ENCODE measurements at regions of chr6 and their contacts with region 1.

Region 1: GRCh38 chr6:2209226-2209809 is 36.1 kb downstream of the GMDS start:
- DNase-seq: peak; percentile 15
- ATAC-seq: peak; percentile 99
- H3K4me3 ChIP-seq: no peak overlapping the region
- H3K27ac ChIP-seq: no peak overlapping the region
- H3K4me1 ChIP-seq: no peaks in the 10 kb centered on the region
- H3K27me3 ChIP-seq: no peaks in the 10 kb centered on the region
- CTCF ChIP-seq: peak; percentile 63 to 89 (median 73)
- EP300 ChIP-seq: no peak
- POLR2A ChIP-seq: no peak
- RAD21 ChIP-seq: peak; percentile 66

Region 2: GRCh38 chr6:2196079-2196679 is 13.1 kb before region 1 on chr6:
- CTCF ChIA-PET with region 1: interaction called, 10 read pairs
- POLR2A ChIA-PET with region 1: interaction called, 4 read pairs
- RAD21 ChIA-PET with region 1: interaction called, 6 read pairs
- SMC1A ChIA-PET with region 1: interaction called, 7 read pairs
- in situ Hi-C with region 1: no loop called
- intact Hi-C with region 1: no loop called
- DNase-seq: peak; percentile 13
- ATAC-seq: peak; percentile 87
- H3K4me3 ChIP-seq: no peak overlapping the region
- H3K27ac ChIP-seq: no peak overlapping the region
- H3K4me1 ChIP-seq: no peaks in the 10 kb centered on the region
- H3K27me3 ChIP-seq: no peaks in the 10 kb centered on the region
- CTCF ChIP-seq: peak; percentile 67 to 79 (median 77)
- EP300 ChIP-seq: no peak
- POLR2A ChIP-seq: no peak
- RAD21 ChIP-seq: peak; percentile 88

Region 3: DNA sequence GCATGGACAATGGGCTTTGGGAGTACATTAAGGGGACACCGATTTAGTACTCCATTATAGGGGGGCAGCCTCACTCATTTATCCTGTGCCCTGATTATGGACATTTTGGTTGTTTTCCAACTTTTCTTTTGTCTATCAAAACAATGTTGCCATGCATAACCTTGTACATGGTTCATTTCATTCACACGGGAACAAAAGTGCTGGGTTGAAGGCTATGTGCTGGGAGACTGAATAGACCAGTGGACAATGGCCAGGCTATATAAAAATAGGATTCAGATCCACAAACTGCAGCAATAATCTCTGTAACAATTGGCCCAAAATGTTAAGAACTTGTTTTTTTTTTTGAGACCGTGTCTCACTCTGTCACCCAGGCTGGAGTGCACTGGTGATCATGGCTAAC is 136.8 kb after region 1 on chr6:
- CTCF ChIA-PET with region 1: interaction called, 177 read pairs
- POLR2A ChIA-PET with region 1: no interaction called
- RAD21 ChIA-PET with region 1: interaction called, 8 read pairs
- SMC1A ChIA-PET with region 1: interaction called, 25 read pairs
- in situ Hi-C with region 1: loop called (anchors 5 kb)
- intact Hi-C with region 1: no loop called
- DNase-seq: no peak
- ATAC-seq: no peak
- H3K4me3 ChIP-seq: no peak overlapping the region
- H3K27ac ChIP-seq: no peak overlapping the region
- H3K4me1 ChIP-seq: no peaks in the 10 kb centered on the region
- H3K27me3 ChIP-seq: no peaks in the 10 kb centered on the region
- CTCF ChIP-seq: no peak
- EP300 ChIP-seq: no peak
- POLR2A ChIP-seq: no peak
- RAD21 ChIP-seq: no peak

Region 4: DNA sequence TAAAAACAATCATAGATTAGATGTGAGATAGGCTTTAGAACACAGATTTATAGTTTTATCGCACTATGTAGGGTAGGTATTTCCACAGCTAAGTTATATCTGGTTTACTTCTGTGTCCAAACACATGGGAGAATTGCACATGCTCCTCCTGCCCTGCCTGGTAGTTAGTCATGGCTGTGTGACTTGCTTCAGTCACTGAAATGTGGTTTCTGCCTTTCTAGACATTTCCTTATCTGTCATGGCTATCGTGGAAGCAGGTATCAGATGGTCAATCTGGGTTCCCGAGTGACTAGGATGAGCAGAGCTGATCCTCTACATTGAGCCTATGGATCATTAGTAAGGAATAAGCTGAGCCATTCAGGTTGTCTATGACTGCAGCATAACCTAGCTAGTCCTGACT is 153.9 kb after region 1 on chr6:
- CTCF ChIA-PET with region 1: interaction called, 7 read pairs
- POLR2A ChIA-PET with region 1: no interaction called
- RAD21 ChIA-PET with region 1: no interaction called
- SMC1A ChIA-PET with region 1: interaction called, 14 read pairs
- in situ Hi-C with region 1: no loop called
- intact Hi-C with region 1: no loop called
- DNase-seq: no peak
- ATAC-seq: no peak
- H3K4me3 ChIP-seq: no peak overlapping the region
- H3K27ac ChIP-seq: no peak overlapping the region
- H3K4me1 ChIP-seq: no peaks in the 10 kb centered on the region
- H3K27me3 ChIP-seq: no peaks in the 10 kb centered on the region
- CTCF ChIP-seq: no peak
- EP300 ChIP-seq: no peak
- POLR2A ChIP-seq: no peak
- RAD21 ChIP-seq: no peak

Region 5: GRCh38 chr6:2403546-2403945 is 194.2 kb after region 1 on chr6:
- CTCF ChIA-PET with region 1: no interaction called
- POLR2A ChIA-PET with region 1: no interaction called
- RAD21 ChIA-PET with region 1: no interaction called
- SMC1A ChIA-PET with region 1: no interaction called
- in situ Hi-C with region 1: no loop called
- intact Hi-C with region 1: no loop called
- DNase-seq: no peak
- ATAC-seq: no peak
- H3K4me3 ChIP-seq: no peak overlapping the region
- H3K27ac ChIP-seq: no peak overlapping the region
- H3K4me1 ChIP-seq: no peaks in the 10 kb centered on the region
- H3K27me3 ChIP-seq: peaks cover 0 to 2% of the 10 kb centered on the region in 2 experiments; a peak in 1 of 4 replicates
- CTCF ChIP-seq: no peak
- EP300 ChIP-seq: no peak
- POLR2A ChIP-seq: no peak
- RAD21 ChIP-seq: no peak

Region 6: DNA sequence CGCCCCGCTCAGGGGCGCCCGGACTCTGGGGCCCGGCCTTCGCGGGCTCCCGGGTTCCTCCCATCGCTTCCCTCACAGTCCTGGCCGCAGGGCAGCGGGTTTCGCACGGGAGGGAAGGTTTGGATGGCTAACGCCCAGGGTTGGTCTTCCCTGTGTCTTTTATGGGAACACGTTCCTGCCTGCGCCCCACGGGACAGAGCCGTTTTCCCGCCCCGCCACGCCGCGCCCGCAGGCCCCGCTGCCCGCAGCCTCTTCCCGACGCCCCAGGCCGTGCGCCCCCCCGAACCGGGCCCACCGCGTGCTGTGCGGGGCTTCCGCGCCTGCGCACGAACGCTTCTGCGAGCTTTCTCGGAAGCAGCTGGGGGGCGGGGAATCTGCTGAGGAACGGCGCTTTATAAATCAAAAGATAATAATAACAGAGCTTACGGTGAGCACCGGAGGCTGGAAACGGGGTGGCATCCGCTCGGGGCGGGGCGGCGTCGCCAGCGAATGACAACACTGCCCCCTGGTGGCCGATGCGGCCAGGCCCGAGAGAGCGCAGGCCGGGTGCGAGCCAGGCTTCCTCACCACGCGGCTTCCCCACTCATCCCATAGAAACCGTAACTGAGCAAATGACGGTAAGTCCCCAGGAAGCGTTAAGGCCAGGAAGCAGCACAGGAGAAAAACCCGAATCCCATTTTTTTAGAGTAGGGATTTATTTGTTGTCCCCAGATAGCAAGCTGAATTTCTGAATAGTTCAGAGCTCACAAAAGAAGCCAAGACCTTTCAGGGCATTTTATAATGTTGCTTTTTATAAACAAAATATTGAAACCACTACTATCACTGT is 425.0 kb after region 1 on chr6:
- CTCF ChIA-PET with region 1: interaction called, 10 read pairs
- POLR2A ChIA-PET with region 1: no interaction called
- RAD21 ChIA-PET with region 1: interaction called, 7 read pairs
- SMC1A ChIA-PET with region 1: no interaction called
- in situ Hi-C with region 1: no loop called
- intact Hi-C with region 1: loop called (anchors 5 kb)
- DNase-seq: no peak
- ATAC-seq: peak; percentile 99
- H3K4me3 ChIP-seq: 0 out of 2 replicates have a peak overlapping the region, but pooled peaks have one; percentile 44
- H3K27ac ChIP-seq: no peak overlapping the region
- H3K4me1 ChIP-seq: no peaks in the 10 kb centered on the region
- H3K27me3 ChIP-seq: peaks cover 0 to 1% of the 10 kb centered on the region in 2 experiments; a peak in 2 of 4 replicates
- CTCF ChIP-seq: peak; percentile 88 to 94 (median 90)
- EP300 ChIP-seq: no peak
- POLR2A ChIP-seq: no peak
- RAD21 ChIP-seq: peak; percentile 76

Measured in GM12878 (cell line).